Mammary epithelial cell (primary cell): ENCODE measurements at regions of chr1 and their contacts with region 1.

Region 1: GRCh38 chr1:49102752-49103151 is 326.1 kb upstream of the BEND5 start:
- DNase-seq: peak; percentile 73
- H3K4me3 ChIP-seq: no peak overlapping the region
- H3K27ac ChIP-seq: peak overlapping the region; percentile 46
- H3K4me1 ChIP-seq: peaks cover 15% of the 10 kb centered on the region
- H3K27me3 ChIP-seq: no peaks in the 10 kb centered on the region
- CTCF ChIP-seq: no peak

Region 2: DNA sequence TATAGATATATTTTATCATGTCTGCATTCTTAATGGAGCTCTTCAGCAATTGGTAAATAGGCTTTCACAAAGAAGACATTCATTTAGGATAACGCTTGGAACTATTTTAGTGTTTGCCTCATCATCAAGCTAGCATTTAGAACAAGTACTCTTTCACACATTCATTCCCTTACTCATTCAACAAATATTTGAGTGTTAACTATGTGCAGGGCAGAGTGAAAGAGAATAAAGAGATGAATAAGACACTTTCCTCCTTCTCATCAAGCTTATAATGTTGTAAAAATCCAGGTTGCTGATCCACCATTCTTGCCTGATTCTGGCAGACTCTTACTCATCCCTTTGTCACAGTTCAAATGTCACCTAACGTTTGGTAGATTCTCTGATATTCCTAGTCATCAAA is 60.3 kb after region 1 on chr1:
- CTCF ChIA-PET with region 1: no interaction called
- dilution Hi-C with region 1: no loop called
- in situ Hi-C with region 1: no loop called
- intact Hi-C with region 1: loop called (anchors 5 kb)
- DNase-seq: peak; percentile 86
- H3K4me3 ChIP-seq: no peak overlapping the region
- H3K27ac ChIP-seq: peak overlapping the region; percentile 41
- H3K4me1 ChIP-seq: peaks cover 8% of the 10 kb centered on the region
- H3K27me3 ChIP-seq: no peaks in the 10 kb centered on the region
- CTCF ChIP-seq: no peak

Region 3: GRCh38 chr1:50332941-50333594 is 1230.3 kb after region 1 on chr1:
- CTCF ChIA-PET with region 1: no interaction called
- dilution Hi-C with region 1: no loop called
- in situ Hi-C with region 1: no loop called
- intact Hi-C with region 1: loop called (anchors 5 kb)
- DNase-seq: peak; percentile 20
- H3K4me3 ChIP-seq: peak overlapping the region; percentile 18 to 49 (median 45)
- H3K27ac ChIP-seq: no peak overlapping the region
- H3K4me1 ChIP-seq: peaks cover 8% of the 10 kb centered on the region
- H3K27me3 ChIP-seq: no peaks in the 10 kb centered on the region
- CTCF ChIP-seq: peak; percentile 59 to 81